Motor neuron (in vitro differentiated cells): ENCODE measurements at regions of chrX and their contacts with region 1.

Region 1: GRCh38 chrX:118577041-118577440 is 81.4 kb downstream of the DOCK11 start:
- ATAC-seq: peak in 1 of 8 experiments; percentile 37
- H3K4me3 ChIP-seq: no peak overlapping the region
- H3K27ac ChIP-seq: no peak overlapping the region
- H3K4me1 ChIP-seq: peaks cover 6 to 7% of the 10 kb centered on the region in 2 donors

Region 2: GRCh38 chrX:118459494-118459893 is 117.5 kb before region 1 on chrX:
- in situ Hi-C with region 1: loop called in 1 of 9 experiments (anchors 25 kb)
- ATAC-seq: peak in 6 of 8 experiments; percentile 55 to 81 (median 65)
- H3K4me3 ChIP-seq: no peak overlapping the region
- H3K27ac ChIP-seq: no peak overlapping the region
- H3K4me1 ChIP-seq: no peaks in the 10 kb centered on the region

Region 3: DNA sequence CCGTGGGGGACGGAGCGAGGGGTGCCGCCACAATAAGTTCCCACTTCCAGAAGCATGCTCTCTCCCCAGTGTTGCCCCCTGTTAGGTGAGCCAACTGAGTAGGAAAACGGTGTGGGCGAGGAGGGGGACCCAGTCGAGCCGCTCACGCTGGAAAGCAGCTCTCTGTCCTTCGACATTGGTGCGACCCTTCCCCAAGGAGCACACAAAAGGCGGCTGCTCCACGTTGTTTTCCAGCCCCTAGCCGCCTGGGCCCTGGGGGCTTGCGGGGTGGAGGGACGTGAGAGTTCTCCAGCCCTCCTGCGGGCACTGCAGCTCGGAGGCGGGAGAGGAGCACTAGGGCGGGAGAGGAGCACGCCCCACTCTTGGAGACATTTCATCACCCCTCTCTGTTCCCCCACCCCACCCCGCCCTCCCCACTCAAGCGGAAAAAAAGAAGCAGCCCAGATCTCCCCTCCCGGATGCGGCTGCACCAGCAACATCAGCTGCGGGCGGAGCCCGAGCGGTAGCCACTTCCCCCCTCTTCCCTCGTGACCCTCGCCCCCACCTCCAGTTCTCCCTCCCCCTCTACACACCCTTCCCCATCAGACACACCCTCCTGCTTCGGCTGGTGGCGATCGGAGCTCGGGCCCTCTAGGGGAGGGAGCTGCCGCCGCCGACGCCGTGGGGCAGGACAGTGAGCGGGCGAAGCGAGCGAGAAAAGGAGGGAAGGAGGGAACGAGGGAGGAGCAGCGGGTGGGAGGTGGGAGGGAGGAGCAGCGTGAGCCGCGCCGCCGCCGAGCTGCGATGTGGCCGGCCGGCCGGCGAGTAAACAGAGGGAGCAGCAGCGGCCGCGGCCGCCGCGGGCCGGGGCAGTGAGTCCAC is 81.8 kb before region 1 on chrX and contains the start of gene DOCK11:
- in situ Hi-C with region 1: loop called in 1 of 9 experiments (anchors 25 kb)
- ATAC-seq: peak; percentile 80 to 91 (median 88)
- H3K4me3 ChIP-seq: peak within 1 kb of the TSS; percentile 51 to 75 (median 59)
- H3K27ac ChIP-seq: peak within 1 kb of the TSS; percentile 73 to 76
- H3K4me1 ChIP-seq: peaks cover 12 to 20% of the 10 kb centered on the region in 2 donors
- total RNA-seq, gene DOCK11: 13.6 to 58.2 (median 22.5) TPM

Region 4: DNA sequence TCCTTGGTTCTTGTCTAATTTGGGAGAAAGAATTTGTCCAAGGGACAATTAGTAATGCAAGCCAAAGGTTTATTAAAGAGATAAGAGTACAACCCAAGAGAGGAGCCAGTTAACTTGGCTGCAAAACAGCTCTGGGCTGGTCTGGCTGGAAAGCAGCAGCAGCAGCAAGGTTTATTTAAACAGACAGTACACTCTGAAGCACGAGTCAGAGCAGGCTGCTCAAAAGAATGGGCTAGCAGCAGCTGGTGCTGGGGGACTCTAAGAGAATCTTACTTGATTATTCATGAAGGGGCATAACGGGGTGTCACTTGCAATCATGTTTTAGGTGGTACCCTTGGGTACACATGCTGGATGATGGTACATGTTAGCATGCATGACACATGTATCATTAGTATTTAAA is 478.6 kb after region 1 on chrX:
- in situ Hi-C with region 1: no loop called
- ATAC-seq: peak in 5 of 8 experiments; percentile 49 to 72 (median 56)
- H3K4me3 ChIP-seq: no peak overlapping the region
- H3K27ac ChIP-seq: no peak overlapping the region
- H3K4me1 ChIP-seq: peaks cover 0 to 4% of the 10 kb centered on the region in 2 donors